ENCODE measurements at regions of chr9 and their contacts with region 1.

Region 1: DNA sequence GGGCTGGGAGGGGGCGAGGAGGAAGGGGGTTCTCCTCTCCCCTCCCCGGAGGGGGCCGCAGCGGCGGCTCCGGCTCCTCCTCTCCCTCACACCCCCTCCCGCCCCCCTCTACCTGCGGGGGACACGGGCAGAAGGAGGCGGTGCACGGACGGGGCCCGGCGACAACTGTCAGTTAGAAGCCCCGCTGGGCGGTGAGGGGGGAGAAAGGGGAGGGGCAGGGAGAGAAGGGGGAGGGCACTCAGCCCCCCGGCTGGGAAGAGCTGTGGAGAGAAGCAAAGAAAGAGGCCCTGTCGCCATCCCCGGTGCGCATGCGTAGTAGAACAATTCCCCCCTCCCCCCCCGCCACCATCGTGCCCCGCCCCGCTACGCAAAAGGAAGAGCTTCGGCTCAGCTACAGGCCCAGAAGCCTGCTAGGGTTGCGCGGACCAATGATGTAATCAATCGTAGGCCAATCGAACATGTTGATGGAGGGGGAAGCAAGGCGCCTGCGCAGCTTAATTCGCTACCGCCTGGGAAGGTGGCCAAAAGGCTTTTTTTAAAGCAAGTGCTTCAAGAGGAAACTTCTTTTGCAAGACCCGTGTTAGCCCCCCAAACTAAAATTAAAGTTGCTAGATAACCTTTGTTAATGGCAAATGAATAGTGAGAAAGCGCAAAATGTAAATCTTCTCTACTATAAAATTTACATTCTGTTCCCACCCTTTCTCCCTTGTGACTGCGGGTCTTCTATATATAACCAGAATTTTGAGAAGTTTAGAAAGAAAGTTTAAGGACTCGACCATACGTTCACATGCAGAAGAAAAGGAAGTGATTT is 7.0 kb downstream of the RANBP6 start:
- DNase-seq: peak; percentile 79 to 98 (median 93)
- ATAC-seq: peak; percentile 84
- H3K4me3 ChIP-seq: peak overlapping the region; percentile 75
- H3K4me3 Mint-ChIP-seq: peak overlapping the region; percentile 74 to 99 (median 94)
- H3K27ac ChIP-seq: peak overlapping the region; percentile 97
- H3K27ac Mint-ChIP-seq: peak overlapping the region; percentile 83 to 97 (median 91)
- H3K4me1 ChIP-seq: peaks cover 20 to 36% of the 10 kb centered on the region in 2 donors
- H3K4me1 Mint-ChIP-seq: peaks cover 26 to 75% (median 65%) of the 10 kb centered on the region in 7 donors
- H3K27me3 ChIP-seq: no peaks in the 10 kb centered on the region
- H3K27me3 Mint-ChIP-seq: no peaks in the 10 kb centered on the region

Region 2: GRCh38 chr9:4679268-4680172 is 1328.9 kb before region 1 on chr9 and contains the start of gene CDC37L1:
- CTCF ChIA-PET with region 1: no interaction called
- POLR2A ChIA-PET with region 1: no interaction called
- intact Hi-C with region 1: loop called (anchors 1 to 2 kb)
- DNase-seq: peak; percentile 98 to 100 (median 99)
- ATAC-seq: peak; percentile 98
- H3K4me3 ChIP-seq: peak within 1 kb of the TSS; percentile 72
- H3K4me3 Mint-ChIP-seq: no peak within 1 kb of the TSS
- H3K27ac ChIP-seq: peak within 1 kb of the TSS; percentile 95
- H3K27ac Mint-ChIP-seq: no peak within 1 kb of the TSS
- H3K4me1 ChIP-seq: peaks cover 15 to 19% of the 10 kb centered on the region in 2 donors
- H3K4me1 Mint-ChIP-seq: peaks cover 9 to 19% (median 17%) of the 10 kb centered on the region in 7 donors
- H3K27me3 ChIP-seq: no peaks in the 10 kb centered on the region
- H3K27me3 Mint-ChIP-seq: no peaks in the 10 kb centered on the region
- total RNA-seq, gene CDC37L1: 13.4 to 28.0 (median 22.9) TPM

Region 3: GRCh38 chr9:5336688-5337087 is 671.7 kb before region 1 on chr9:
- CTCF ChIA-PET with region 1: no interaction called
- POLR2A ChIA-PET with region 1: no interaction called
- intact Hi-C with region 1: loop called in 1 of 2 experiments (anchors 5 kb)
- DNase-seq: peak in 7 of 9 donors; percentile 47 to 70 (median 60)
- ATAC-seq: peak; percentile 62
- H3K4me3 ChIP-seq: peak overlapping the region; percentile 27
- H3K4me3 Mint-ChIP-seq: peak overlapping the region; percentile 64 to 87 (median 80)
- H3K27ac ChIP-seq: peak overlapping the region; percentile 64
- H3K27ac Mint-ChIP-seq: peak overlapping the region; percentile 79 to 95 (median 91)
- H3K4me1 ChIP-seq: peaks cover 24 to 28% of the 10 kb centered on the region in 2 donors
- H3K4me1 Mint-ChIP-seq: peaks cover 20 to 64% (median 50%) of the 10 kb centered on the region in 7 donors
- H3K27me3 ChIP-seq: no peaks in the 10 kb centered on the region
- H3K27me3 Mint-ChIP-seq: no peaks in the 10 kb centered on the region

Region 4: GRCh38 chr9:5832543-5833529 is 175.5 kb before region 1 on chr9 and contains the start of gene ERMP1:
- CTCF ChIA-PET with region 1: interaction called, 3 read pairs
- POLR2A ChIA-PET with region 1: interaction called, 9 read pairs
- intact Hi-C with region 1: loop called (anchors 1 kb)
- DNase-seq: peak; percentile 83 to 94 (median 91)
- ATAC-seq: peak; percentile 95
- H3K4me3 ChIP-seq: peak within 1 kb of the TSS; percentile 85
- H3K4me3 Mint-ChIP-seq: peak within 1 kb of the TSS; percentile 91 to 99 (median 95)
- H3K27ac ChIP-seq: peak within 1 kb of the TSS; percentile 60
- H3K27ac Mint-ChIP-seq: peak within 1 kb of the TSS; percentile 79 to 96 (median 89)
- H3K4me1 ChIP-seq: peaks cover 25 to 33% of the 10 kb centered on the region in 2 donors
- H3K4me1 Mint-ChIP-seq: peaks cover 28 to 71% (median 60%) of the 10 kb centered on the region in 7 donors
- H3K27me3 ChIP-seq: no peaks in the 10 kb centered on the region
- H3K27me3 Mint-ChIP-seq: no peaks in the 10 kb centered on the region
- total RNA-seq, gene ERMP1: 9.5 to 37.1 (median 20.0) TPM

Region 5: DNA sequence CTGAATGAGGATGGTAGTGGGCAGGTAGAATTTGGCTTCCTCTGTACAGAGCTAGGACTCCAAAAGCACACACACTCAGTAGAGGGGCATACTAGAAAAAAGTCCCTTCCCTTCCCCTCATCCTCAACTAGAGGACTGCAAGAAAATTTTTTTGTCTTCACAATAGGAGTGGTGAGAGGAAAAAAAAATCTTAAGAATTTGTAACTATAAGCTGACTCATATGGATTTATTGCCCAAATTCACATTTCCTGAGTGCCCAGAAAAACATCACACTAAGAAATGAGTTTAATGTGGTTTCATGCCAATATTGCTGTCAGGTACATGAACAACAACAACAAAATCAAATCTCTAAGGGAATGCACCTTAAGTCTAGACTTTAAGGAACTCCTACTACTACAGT is 36.6 kb before region 1 on chr9:
- CTCF ChIA-PET with region 1: no interaction called
- POLR2A ChIA-PET with region 1: no interaction called
- intact Hi-C with region 1: loop called in 1 of 2 experiments (anchors 5 kb)
- DNase-seq: no peak
- ATAC-seq: no peak
- H3K4me3 ChIP-seq: no peak overlapping the region
- H3K4me3 Mint-ChIP-seq: no peak overlapping the region
- H3K27ac ChIP-seq: no peak overlapping the region
- H3K27ac Mint-ChIP-seq: peak overlapping the region in 1 of 9 donors; percentile 0
- H3K4me1 ChIP-seq: no peaks in the 10 kb centered on the region
- H3K4me1 Mint-ChIP-seq: peaks cover 14 to 39% (median 22%) of the 10 kb centered on the region in 7 donors
- H3K27me3 ChIP-seq: no peaks in the 10 kb centered on the region
- H3K27me3 Mint-ChIP-seq: no peaks in the 10 kb centered on the region

Region 6: DNA sequence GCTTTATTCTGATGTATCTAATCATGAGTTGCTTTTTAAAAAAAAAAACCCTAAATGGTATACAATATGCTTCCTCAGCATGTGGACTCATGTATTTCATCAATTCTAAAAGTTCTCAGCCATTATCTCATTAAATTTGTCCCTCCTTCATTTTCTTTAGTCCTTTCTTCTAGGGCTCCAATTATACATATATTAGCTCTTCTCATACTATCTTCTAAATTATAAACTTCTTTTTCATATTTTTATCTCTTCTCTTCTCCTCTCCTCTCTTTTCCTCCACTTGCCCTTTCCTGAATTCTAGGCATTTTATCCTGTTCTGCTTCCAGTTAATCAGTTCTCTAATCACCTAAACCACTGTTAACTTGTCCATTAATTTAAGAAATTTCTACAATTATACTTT is 152.2 kb after region 1 on chr9:
- CTCF ChIA-PET with region 1: no interaction called
- POLR2A ChIA-PET with region 1: no interaction called
- intact Hi-C with region 1: no loop called
- DNase-seq: no peak
- ATAC-seq: no peak
- H3K4me3 ChIP-seq: no peak overlapping the region
- H3K4me3 Mint-ChIP-seq: no peak overlapping the region
- H3K27ac ChIP-seq: no peak overlapping the region
- H3K27ac Mint-ChIP-seq: no peak overlapping the region
- H3K4me1 ChIP-seq: no peaks in the 10 kb centered on the region
- H3K4me1 Mint-ChIP-seq: no peaks in the 10 kb centered on the region
- H3K27me3 ChIP-seq: no peaks in the 10 kb centered on the region
- H3K27me3 Mint-ChIP-seq: peaks cover 4 to 22% (median 6%) of the 10 kb centered on the region in 5 donors

Region 7: GRCh38 chr9:6428940-6429889 is 420.8 kb after region 1 on chr9:
- CTCF ChIA-PET with region 1: no interaction called
- POLR2A ChIA-PET with region 1: no interaction called
- intact Hi-C with region 1: loop called in 1 of 2 experiments (anchors 5 kb)
- DNase-seq: peak in 1 of 9 donors; percentile 12
- ATAC-seq: peak; percentile 78
- H3K4me3 ChIP-seq: no peak overlapping the region
- H3K4me3 Mint-ChIP-seq: peak overlapping the region in 9 of 10 donors; percentile 1 to 80 (median 50)
- H3K27ac ChIP-seq: no peak overlapping the region
- H3K27ac Mint-ChIP-seq: peak overlapping the region in 8 of 9 donors; percentile 20 to 85 (median 57)
- H3K4me1 ChIP-seq: peaks cover 15 to 45% of the 10 kb centered on the region in 2 donors
- H3K4me1 Mint-ChIP-seq: peaks cover 52 to 90% (median 75%) of the 10 kb centered on the region in 7 donors
- H3K27me3 ChIP-seq: no peaks in the 10 kb centered on the region
- H3K27me3 Mint-ChIP-seq: no peaks in the 10 kb centered on the region

Region 8: GRCh38 chr9:7707934-7708333 is 1699.6 kb after region 1 on chr9:
- CTCF ChIA-PET with region 1: no interaction called
- POLR2A ChIA-PET with region 1: no interaction called
- intact Hi-C with region 1: no loop called
- DNase-seq: no peak
- ATAC-seq: no peak
- H3K4me3 ChIP-seq: no peak overlapping the region
- H3K4me3 Mint-ChIP-seq: no peak overlapping the region
- H3K27ac ChIP-seq: no peak overlapping the region
- H3K27ac Mint-ChIP-seq: no peak overlapping the region
- H3K4me1 ChIP-seq: no peaks in the 10 kb centered on the region
- H3K4me1 Mint-ChIP-seq: no peaks in the 10 kb centered on the region
- H3K27me3 ChIP-seq: no peaks in the 10 kb centered on the region
- H3K27me3 Mint-ChIP-seq: no peaks in the 10 kb centered on the region

Region 9: DNA sequence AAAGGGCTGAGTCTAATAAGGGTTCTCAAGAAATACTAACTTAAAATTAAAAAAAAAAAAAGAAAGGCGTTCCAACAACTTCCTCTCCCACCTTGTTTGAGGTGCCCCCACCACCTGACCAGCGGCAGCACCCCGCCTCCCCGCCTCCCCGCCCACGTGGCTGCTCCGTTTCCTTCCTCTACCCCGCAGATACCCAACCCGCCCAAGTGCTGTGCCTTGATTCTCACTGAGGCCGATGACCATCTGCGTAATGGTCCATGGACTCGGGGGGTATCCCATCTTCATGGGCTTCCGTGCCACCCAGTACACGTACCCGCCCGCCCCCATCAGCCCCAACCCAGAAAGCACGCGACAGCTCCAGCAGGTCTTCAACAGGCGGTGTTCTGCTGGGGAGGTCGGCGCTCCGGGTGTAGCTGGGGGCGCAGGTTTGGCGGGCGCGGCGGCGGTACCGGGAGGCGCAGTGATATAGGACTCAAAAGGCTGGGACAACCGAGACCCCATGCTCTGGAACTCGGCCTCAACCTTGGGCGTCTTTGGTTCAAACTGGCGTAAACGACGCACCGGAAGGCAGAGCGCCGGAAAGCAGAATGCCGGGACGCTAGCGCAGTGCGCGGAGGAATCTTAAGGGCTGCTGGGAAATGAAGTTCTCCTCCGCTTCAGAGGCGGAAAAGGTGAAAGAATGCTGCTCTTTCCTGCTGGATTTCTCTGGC is 1791.0 kb after region 1 on chr9 and contains the start of gene DMAC1:
- CTCF ChIA-PET with region 1: no interaction called
- POLR2A ChIA-PET with region 1: no interaction called
- intact Hi-C with region 1: loop called in 1 of 2 experiments (anchors 5 kb)
- DNase-seq: peak; percentile 50 to 79 (median 72)
- ATAC-seq: peak; percentile 96
- H3K4me3 ChIP-seq: peak within 1 kb of the TSS; percentile 96
- H3K4me3 Mint-ChIP-seq: peak within 1 kb of the TSS; percentile 91 to 98 (median 95)
- H3K27ac ChIP-seq: peak within 1 kb of the TSS; percentile 88
- H3K27ac Mint-ChIP-seq: peak within 1 kb of the TSS; percentile 90 to 98 (median 93)
- H3K4me1 ChIP-seq: peaks cover 0 to 8% of the 10 kb centered on the region in 2 donors
- H3K4me1 Mint-ChIP-seq: peaks cover 12 to 62% (median 40%) of the 10 kb centered on the region in 7 donors
- H3K27me3 ChIP-seq: no peaks in the 10 kb centered on the region
- H3K27me3 Mint-ChIP-seq: peaks cover 0 to under 1% (median 0%) of the 10 kb centered on the region in 5 donors
- total RNA-seq, gene DMAC1: 17.5 to 54.1 (median 44.3) TPM

Measured in naive thymus-derived CD4-positive, alpha-beta T cell (primary cell).